Heart right ventricle (tissue), 16 donors: ENCODE measurements at regions of chr11 and their contacts with region 1.

Region 1: DNA sequence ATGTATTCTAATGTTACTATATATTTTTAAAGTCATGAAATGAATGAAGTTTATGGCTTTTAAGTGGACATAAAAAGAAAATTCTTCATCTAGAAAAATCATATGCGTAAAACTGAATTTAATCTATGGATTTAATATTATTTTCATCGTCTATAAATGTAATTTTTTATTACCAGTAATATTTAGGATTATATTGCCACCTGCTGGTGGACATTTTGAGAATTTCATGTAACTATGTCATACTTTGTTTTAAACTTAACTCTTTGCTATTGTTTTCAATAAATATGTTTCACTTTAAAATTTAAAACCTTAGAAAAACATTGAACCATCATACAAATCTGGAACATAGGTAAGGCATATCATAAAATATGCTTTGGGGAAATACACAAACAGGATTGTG is 66.5 kb upstream of the CEP126 start:
- DNase-seq: no peak
- ATAC-seq: no peak
- H3K4me3 ChIP-seq: no peak overlapping the region
- H3K27ac ChIP-seq: no peak overlapping the region
- H3K4me1 ChIP-seq: no peaks in the 10 kb centered on the region
- H3K27me3 ChIP-seq: no peaks in the 10 kb centered on the region
- CTCF ChIP-seq: peak in 8 of 9 donors; percentile 12 to 61 (median 51)

Region 2: DNA sequence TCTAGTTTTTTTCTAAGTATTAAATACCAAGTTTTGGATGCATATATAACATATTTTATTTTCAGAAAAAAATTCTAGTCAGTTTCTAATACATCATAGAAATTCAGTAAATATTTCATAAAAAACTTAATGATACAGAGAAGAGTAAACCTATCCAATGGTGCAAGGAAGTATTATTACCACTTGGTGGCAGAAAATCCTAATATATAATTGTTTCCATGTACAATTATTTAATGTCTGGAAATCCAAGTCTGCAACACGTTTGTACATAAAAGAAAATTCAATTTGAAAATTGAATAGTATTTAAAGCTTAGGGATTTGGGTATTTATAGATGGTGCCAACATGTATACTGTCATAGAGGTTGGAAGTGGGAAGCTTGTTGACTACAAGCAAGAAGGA is 391.4 kb before region 1 on chr11:
- intact Hi-C with region 1: loop called (anchors 2 to 10 kb)
- DNase-seq: no peak
- ATAC-seq: peak in 1 of 8 donors; percentile 61
- H3K4me3 ChIP-seq: no peak overlapping the region
- H3K27ac ChIP-seq: no peak overlapping the region
- H3K4me1 ChIP-seq: no peaks in the 10 kb centered on the region
- H3K27me3 ChIP-seq: no peaks in the 10 kb centered on the region
- CTCF ChIP-seq: peak in 7 of 9 donors; percentile 42 to 66 (median 51)